ENCODE measurements at regions of chr15 and their contacts with region 1.

Region 1: GRCh38 chr15:62719316-62719715 is 323.2 kb upstream of the TPM1 start:
- DNase-seq: no peak
- ATAC-seq: no peak
- H3K4me3 ChIP-seq: no peak overlapping the region
- H3K27ac ChIP-seq: no peak overlapping the region
- H3K4me1 ChIP-seq: no peaks in the 10 kb centered on the region
- H3K27me3 ChIP-seq: no peaks in the 10 kb centered on the region
- CTCF ChIP-seq: no peak

Region 2: GRCh38 chr15:62624547-62625378 is 94.6 kb before region 1 on chr15:
- CTCF ChIA-PET with region 1: no interaction called
- POLR2A ChIA-PET with region 1: interaction called, 16 read pairs
- in situ Hi-C with region 1: no loop called
- intact Hi-C with region 1: no loop called
- DNase-seq: no peak
- ATAC-seq: no peak
- H3K4me3 ChIP-seq: no peak overlapping the region
- H3K27ac ChIP-seq: no peak overlapping the region
- H3K4me1 ChIP-seq: no peaks in the 10 kb centered on the region
- H3K27me3 ChIP-seq: no peaks in the 10 kb centered on the region
- CTCF ChIP-seq: no peak

Region 3: GRCh38 chr15:62782039-62782791 is 62.9 kb after region 1 on chr15:
- CTCF ChIA-PET with region 1: no interaction called
- POLR2A ChIA-PET with region 1: interaction called, 14 read pairs
- in situ Hi-C with region 1: no loop called
- intact Hi-C with region 1: no loop called
- DNase-seq: peak; percentile 69
- ATAC-seq: peak; percentile 95
- H3K4me3 ChIP-seq: no peak overlapping the region
- H3K27ac ChIP-seq: peak overlapping the region; percentile 64
- H3K4me1 ChIP-seq: peaks cover 24% of the 10 kb centered on the region
- H3K27me3 ChIP-seq: no peaks in the 10 kb centered on the region
- CTCF ChIP-seq: peak; percentile 86